ENCODE measurements at regions of chr17 and their contacts with region 1.

Region 1: DNA sequence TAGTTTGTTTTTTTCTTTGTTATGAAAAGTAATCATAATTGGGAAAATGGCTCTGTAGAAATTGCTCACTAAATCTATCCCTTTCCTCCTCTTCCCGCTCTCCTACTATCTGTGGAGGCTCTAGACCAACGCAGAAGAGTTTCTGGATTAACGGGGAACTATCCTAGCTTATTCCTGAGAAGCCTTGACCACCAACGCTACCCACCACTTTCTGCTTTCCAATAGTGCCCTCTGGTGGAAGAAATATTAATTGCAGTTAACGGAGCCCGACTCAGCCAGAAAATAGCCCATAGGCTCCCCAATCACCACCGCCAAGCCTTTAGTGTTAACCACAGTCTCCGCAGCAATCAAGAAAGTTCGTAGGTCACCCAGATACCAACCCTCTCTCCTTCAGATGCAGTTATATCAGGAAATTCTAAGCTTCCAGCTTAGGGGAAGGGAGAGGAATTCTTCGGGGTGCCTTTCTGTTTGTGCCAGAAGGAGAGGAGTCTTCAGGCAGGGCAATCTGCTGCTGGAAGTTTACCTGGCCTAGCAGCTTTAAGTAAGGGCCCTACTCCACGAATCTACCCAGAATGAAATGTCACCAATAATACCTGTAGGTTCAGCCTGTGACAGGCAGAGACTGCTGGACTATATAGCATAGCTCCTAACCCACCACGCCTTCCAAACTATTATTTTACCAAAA is 23.0 kb upstream of the NSRP1 start:
- DNase-seq: peak; percentile 72
- CTCF ChIP-seq: peak; percentile 79

Region 2: DNA sequence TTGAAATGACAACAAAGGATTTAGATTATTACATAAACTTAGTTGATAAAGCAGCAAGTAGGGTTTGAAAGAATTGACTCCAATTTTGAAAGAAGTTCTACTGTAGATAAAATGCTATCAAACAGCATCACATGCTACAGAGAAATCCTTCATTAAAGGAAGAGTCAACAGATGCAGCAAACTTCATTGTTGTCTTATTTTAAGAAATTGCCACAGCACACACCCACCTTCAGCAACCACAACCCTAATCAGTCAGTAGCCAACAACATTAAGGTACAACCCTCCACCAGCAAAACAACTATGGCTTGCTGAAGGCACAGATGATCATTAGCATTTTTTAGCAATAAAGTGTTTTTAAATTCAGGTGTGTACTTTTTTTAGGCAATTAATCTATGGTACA is 52.1 kb before region 1 on chr17:
- CTCF ChIA-PET with region 1: interaction called, 17 read pairs
- POLR2A ChIA-PET with region 1: no interaction called
- DNase-seq: no peak
- CTCF ChIP-seq: no peak

Region 3: DNA sequence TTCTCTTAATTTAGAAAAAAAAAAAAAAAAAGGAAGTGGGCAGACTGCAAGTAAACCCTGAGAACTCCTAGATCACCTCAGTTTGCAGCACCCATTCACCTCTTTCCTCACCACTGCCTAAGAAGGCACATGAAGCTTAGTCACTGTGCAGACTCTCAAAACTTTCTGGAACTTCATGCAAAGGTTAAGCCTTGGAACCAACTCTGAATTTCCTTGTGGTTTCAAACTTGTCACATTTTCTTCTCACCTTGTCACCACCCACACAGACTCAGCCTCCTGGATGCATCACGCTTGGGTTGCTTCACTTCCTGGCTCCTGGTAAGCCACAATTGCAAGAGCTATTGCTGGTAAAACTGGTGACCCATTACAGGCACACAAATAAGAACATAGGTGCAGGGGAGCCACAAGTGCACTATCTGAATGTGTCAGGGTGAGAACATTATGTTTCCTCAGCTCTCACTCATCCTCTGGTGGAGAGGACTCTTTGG is 270.2 kb after region 1 on chr17:
- CTCF ChIA-PET with region 1: no interaction called
- POLR2A ChIA-PET with region 1: no interaction called
- DNase-seq: peak; percentile 71
- CTCF ChIP-seq: no peak